Common myeloid progenitor, CD34-positive (primary cell): ENCODE measurements at regions of chr2 and their contacts with region 1.

Region 1: GRCh38 chr2:176140513-176141317 is 10.6 kb upstream of the HOXD4 start:
- DNase-seq: peak; percentile 73 to 86 (median 84)
- H3K4me3 ChIP-seq: peak overlapping the region; percentile 16 to 75 (median 59)
- H3K27ac ChIP-seq: no peak overlapping the region
- H3K4me1 ChIP-seq: peaks cover 0 to 17% (median 13%) of the 10 kb centered on the region in 4 experiments
- H3K27me3 ChIP-seq: peaks cover 35 to 97% (median 67%) of the 10 kb centered on the region in 5 experiments

Region 2: GRCh38 chr2:176001916-176002687 is 138.6 kb before region 1 on chr2 and contains the start of gene LNPK:
- CTCF ChIA-PET with region 1: no interaction called
- POLR2A ChIA-PET with region 1: no interaction called
- DNase-seq: peak; percentile 88 to 95 (median 94)
- H3K4me3 ChIP-seq: peak within 1 kb of the TSS; percentile 79 to 94 (median 90)
- H3K27ac ChIP-seq: peak within 1 kb of the TSS in 1 of 2 experiments; percentile 81
- H3K4me1 ChIP-seq: peaks cover 8 to 18% (median 13%) of the 10 kb centered on the region in 4 experiments
- H3K27me3 ChIP-seq: no peaks in the 10 kb centered on the region

Region 3: GRCh38 chr2:176126929-176127773 is 13.6 kb before region 1 on chr2:
- CTCF ChIA-PET with region 1: interaction called, 40 read pairs
- POLR2A ChIA-PET with region 1: no interaction called
- DNase-seq: peak; percentile 72 to 86 (median 76)
- H3K4me3 ChIP-seq: no peak overlapping the region
- H3K27ac ChIP-seq: no peak overlapping the region
- H3K4me1 ChIP-seq: peaks cover 3 to 25% (median 18%) of the 10 kb centered on the region in 4 experiments
- H3K27me3 ChIP-seq: peaks cover 22 to 99% (median 64%) of the 10 kb centered on the region in 5 experiments

Region 4: DNA sequence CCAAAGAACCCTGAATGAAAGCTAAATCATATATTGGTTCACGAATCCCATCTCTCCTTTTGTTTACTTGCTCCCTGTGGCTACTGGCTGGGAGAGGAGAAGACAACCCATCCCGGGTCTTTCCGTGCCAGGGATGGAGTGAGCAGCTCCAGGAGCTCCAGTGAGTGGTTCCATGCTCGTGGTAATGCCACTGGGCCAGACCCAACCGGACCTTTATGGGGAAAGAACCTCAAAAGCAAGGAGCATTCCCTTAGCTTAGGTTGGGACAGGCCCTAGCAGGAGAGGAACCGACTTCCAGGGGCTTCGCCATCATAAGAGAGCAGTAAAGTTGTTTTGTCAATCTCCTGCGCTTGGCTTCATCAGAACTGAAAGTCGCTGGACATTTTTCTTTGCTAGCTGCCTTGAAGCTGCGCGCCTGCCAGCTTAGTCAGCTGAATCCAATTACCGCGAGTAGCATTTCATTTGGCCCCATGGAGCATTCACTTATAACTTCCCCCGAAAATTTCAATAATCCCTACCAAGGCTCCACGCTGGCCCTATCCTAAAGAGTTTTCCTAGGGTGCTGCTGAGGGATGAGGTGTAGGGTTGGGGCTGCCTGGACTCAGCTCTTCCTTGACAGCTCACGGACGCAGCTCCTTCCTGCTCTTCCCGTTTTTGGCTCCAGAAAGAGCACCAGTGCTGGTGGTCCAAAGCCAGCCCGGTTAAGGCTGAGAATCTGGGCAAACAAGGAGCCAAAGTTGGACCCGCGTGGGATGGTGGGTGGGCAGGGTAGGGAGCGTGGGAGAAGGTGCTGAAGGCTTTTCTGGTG is 21.3 kb after region 1 on chr2:
- CTCF ChIA-PET with region 1: interaction called, 13 read pairs
- POLR2A ChIA-PET with region 1: no interaction called
- DNase-seq: no peak
- H3K4me3 ChIP-seq: no peak overlapping the region
- H3K27ac ChIP-seq: no peak overlapping the region
- H3K4me1 ChIP-seq: peaks cover 0 to 18% (median 16%) of the 10 kb centered on the region in 4 experiments
- H3K27me3 ChIP-seq: peaks cover 14 to 100% (median 74%) of the 10 kb centered on the region in 5 experiments

Region 5: GRCh38 chr2:176356251-176356650 is 215.5 kb after region 1 on chr2:
- CTCF ChIA-PET with region 1: no interaction called
- POLR2A ChIA-PET with region 1: no interaction called
- DNase-seq: no peak
- H3K4me3 ChIP-seq: no peak overlapping the region
- H3K27ac ChIP-seq: no peak overlapping the region
- H3K4me1 ChIP-seq: no peaks in the 10 kb centered on the region
- H3K27me3 ChIP-seq: no peaks in the 10 kb centered on the region

Region 6: GRCh38 chr2:176554101-176555048 is 413.7 kb after region 1 on chr2:
- CTCF ChIA-PET with region 1: interaction called, 38 read pairs
- POLR2A ChIA-PET with region 1: interaction called, 3 read pairs
- DNase-seq: peak; percentile 70 to 83 (median 79)
- H3K4me3 ChIP-seq: peak overlapping the region in 6 of 7 experiments; percentile 58 to 74 (median 66)
- H3K27ac ChIP-seq: no peak overlapping the region
- H3K4me1 ChIP-seq: peaks cover 0 to 10% (median 9%) of the 10 kb centered on the region in 4 experiments
- H3K27me3 ChIP-seq: peaks cover 9 to 86% (median 27%) of the 10 kb centered on the region in 5 experiments

Region 7: GRCh38 chr2:176653479-176654443 is 513.0 kb after region 1 on chr2:
- CTCF ChIA-PET with region 1: interaction called, 53 read pairs
- POLR2A ChIA-PET with region 1: no interaction called
- DNase-seq: peak; percentile 58 to 74 (median 71)
- H3K4me3 ChIP-seq: no peak overlapping the region
- H3K27ac ChIP-seq: no peak overlapping the region
- H3K4me1 ChIP-seq: peaks cover 0 to 2% (median 0%) of the 10 kb centered on the region in 4 experiments
- H3K27me3 ChIP-seq: peaks cover 7 to 58% (median 22%) of the 10 kb centered on the region in 5 experiments